ENCODE measurements at regions of chr1 and their contacts with region 1.

Region 1: DNA sequence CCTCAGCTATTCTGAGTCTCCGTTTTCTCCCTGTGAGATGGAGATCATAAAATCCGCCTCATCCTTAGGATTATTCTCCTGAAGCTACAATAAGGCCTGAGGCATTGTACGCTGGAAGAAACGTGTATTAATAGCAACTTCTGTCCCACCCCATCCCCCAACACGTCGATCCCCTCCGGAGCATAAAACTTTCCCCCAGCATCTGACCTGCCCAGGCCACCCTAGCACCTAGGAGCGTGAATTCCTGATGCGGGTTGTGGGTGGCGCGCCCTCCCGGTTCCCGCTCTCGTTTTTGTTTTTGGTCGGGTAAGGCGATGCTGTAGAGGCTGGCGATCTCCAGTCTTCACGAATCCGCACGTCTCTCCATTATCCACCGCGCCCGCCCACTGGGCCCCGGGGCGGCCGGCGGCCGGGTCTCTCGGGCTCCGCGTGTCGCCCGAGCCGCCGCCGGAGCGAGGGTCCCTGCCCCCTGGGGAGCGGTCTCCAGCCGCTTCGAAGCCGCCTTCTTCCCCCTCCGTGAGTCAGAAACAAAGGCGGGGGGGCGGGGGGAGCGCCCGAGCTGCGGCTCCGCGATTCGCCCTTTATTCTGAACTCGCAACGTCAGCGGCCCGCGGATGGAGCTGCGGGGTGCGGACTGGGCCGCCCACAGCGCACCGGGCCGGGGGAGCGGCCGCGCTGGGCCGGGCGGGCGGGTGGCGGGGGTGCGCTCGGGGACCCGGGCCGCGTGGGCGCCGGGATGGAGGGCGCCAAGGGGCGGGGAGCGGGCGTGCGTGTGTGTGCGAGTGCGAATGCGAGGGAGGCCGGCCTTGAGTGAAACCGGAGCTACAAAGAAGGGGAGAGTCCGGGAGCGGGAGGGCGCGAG is at the start of gene PLEKHO1:
- DNase-seq: peak; percentile 87
- H3K4me3 ChIP-seq: peak within 1 kb of the TSS; percentile 75 to 94 (median 79)
- H3K27ac ChIP-seq: peak within 1 kb of the TSS; percentile 92 to 96 (median 94)
- H3K4me1 ChIP-seq: peaks cover 3 to 57% (median 20%) of the 10 kb centered on the region in 4 donors
- H3K27me3 ChIP-seq: peaks cover 26% of the 10 kb centered on the region
- CTCF ChIP-seq: no peak
- EP300 ChIP-seq: no peak
- POLR2A ChIP-seq: peak; percentile 70
- total RNA-seq, gene PLEKHO1: 35.9 to 76.3 (median 49.7) TPM

Region 2: DNA sequence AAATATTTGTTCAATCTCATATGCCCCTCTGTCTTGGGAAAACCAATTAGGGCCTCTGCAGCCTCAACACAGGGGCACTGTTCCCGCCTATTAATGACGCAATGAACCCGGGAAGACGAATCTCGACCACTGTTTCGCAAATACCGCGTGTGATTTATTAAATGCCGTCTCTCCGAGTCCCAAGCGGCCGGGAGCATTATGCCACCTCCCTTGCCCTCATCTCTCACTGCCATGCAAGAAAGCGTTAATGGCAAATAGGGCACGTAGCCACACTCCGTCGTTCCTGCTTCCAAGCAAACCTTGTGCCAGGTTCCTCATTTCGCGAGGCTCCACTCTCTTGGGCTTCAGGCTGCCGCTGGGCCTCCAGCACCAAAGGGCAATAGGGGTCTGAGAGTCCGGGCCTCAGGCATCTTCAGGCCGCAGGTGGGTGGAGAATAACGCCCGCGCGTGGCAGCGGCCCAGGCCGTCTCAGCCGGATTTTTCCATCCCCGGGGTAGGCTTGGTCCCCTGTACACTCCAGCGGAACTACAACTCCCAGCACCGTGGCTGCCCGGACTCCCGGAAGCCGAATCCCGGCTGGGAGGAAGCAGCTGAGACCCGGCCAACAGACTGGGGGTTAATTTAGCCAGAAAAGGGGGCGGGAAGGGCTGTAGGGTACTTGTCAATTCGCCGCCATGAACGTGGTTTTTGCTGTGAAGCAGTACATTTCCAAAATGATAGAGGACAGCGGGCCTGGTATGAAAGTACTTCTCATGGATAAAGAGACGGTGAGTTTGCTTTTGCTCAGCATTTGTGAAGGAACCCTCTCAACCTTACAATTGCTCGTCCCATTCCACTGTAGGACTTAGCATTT is 82.1 kb before region 1 on chr1 and contains the start of gene VPS45:
- in situ Hi-C with region 1: loop called in 1 of 4 experiments (anchors 25 kb)
- intact Hi-C with region 1: loop called (anchors 5 kb)
- DNase-seq: peak; percentile 92
- H3K4me3 ChIP-seq: peak within 1 kb of the TSS; percentile 49 to 86 (median 60)
- H3K27ac ChIP-seq: peak within 1 kb of the TSS; percentile 91 to 94 (median 93)
- H3K4me1 ChIP-seq: peaks cover 0 to 35% (median 11%) of the 10 kb centered on the region in 4 donors
- H3K27me3 ChIP-seq: no peaks in the 10 kb centered on the region
- CTCF ChIP-seq: peak in 3 of 5 experiments; percentile 19 to 62 (median 46)
- EP300 ChIP-seq: no peak
- POLR2A ChIP-seq: peak; percentile 60
- total RNA-seq, gene VPS45: 16.1 to 47.5 (median 34.7) TPM

Region 3: DNA sequence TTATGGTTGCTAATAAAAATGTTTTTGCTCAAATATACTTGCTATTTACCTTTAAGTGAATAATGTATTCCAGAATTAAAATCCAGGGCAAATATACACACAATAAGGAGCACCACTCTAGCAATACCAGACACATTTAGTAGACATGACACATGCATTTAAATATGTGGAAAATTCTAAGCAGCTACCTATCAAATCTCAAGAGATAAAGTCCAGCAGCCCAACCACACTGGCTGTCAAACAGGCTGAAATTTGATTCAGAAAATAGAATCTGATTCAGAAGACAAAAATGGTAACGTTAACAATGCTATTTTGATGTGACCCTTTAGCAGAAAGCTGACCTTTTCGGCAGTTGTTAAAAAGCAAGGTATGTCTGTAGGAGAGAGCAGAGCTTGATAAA is 42.5 kb after region 1 on chr1:
- in situ Hi-C with region 1: no loop called
- intact Hi-C with region 1: loop called (anchors 5 kb)
- DNase-seq: no peak
- H3K4me3 ChIP-seq: no peak overlapping the region
- H3K27ac ChIP-seq: no peak overlapping the region
- H3K4me1 ChIP-seq: no peaks in the 10 kb centered on the region
- H3K27me3 ChIP-seq: no peaks in the 10 kb centered on the region
- CTCF ChIP-seq: no peak
- EP300 ChIP-seq: no peak
- POLR2A ChIP-seq: no peak

Region 4: DNA sequence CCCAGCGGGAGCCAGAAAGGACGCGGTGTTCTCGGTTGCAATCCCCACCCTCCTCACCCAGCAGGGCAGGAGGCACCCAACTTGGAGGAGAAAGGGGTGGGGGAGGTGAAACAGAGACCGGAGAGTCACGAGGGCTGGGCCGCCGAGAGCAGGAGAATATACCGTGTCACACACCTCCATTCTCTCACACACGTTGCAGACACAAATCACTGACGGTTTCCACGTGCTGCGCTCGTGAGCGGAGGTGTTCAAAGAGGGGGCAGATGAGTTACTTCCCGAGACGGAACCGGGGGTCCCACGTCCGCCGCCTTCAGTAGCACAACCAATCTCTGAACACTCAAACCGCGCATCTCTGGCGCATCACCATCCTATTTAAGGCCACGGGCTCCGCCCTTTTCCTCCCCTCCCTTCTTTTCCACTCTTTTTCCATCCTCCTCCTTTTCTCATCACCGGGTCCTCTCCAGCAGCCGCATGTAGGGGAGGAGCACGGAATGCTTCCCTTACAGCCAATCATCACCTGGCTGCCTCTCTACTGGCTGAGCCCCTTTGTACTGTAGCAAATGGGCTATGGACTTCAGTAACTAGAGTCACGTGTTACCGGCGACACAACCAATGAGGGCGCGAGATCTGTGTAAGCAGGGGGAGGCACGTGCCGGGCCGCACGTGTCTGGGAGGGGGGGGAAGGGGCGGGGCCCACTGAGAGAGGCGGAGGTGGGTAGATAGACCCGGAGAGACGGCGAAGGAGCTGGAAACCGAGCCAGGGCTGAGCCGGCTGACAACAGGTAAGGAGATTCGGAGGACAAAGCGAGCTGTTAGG is 132.5 kb after region 1 on chr1 and contains the start of gene CIART:
- in situ Hi-C with region 1: no loop called
- intact Hi-C with region 1: no loop called
- DNase-seq: peak; percentile 82
- H3K4me3 ChIP-seq: peak within 1 kb of the TSS; percentile 28 to 60 (median 42)
- H3K27ac ChIP-seq: peak within 1 kb of the TSS; percentile 82 to 91 (median 90)
- H3K4me1 ChIP-seq: peaks cover 15 to 41% (median 24%) of the 10 kb centered on the region in 4 donors
- H3K27me3 ChIP-seq: no peaks in the 10 kb centered on the region
- CTCF ChIP-seq: no peak
- EP300 ChIP-seq: peak; percentile 84
- POLR2A ChIP-seq: peak; percentile 49
- total RNA-seq, gene CIART: 0.60 to 4.5 (median 1.5) TPM